RWPE1 (cell line): ENCODE measurements at regions of chr1 and their contacts with region 1.

Region 1: GRCh38 chr1:84772428-84772943 is 82.2 kb upstream of the SSX2IP start:
- DNase-seq: peak; percentile 80
- H3K27ac ChIP-seq: no peak overlapping the region
- CTCF ChIP-seq: peak; percentile 89

Region 2: GRCh38 chr1:84668185-84668584 is 104.3 kb before region 1 on chr1:
- CTCF ChIA-PET with region 1: no interaction called
- POLR2A ChIA-PET with region 1: no interaction called
- DNase-seq: no peak
- H3K27ac ChIP-seq: no peak overlapping the region
- CTCF ChIP-seq: no peak

Region 3: DNA sequence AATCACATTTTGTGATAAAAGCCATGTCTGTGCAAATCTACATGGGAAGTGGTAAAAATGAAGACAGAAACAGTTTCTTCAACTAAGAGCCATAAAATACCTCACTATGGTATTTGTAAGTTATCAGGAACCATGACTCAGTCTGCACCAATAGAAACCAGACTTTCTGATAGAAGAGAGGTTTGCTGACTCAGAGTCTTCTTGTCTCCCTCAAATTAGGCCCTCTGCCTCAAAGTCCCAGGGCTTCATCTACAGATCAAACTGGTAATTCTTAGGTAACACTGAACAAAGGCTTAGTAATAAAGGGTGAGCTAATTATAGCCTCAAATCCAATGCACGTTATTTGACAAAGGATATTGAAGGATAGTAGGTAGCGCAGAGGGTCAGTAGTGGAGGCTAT is 51.3 kb before region 1 on chr1:
- CTCF ChIA-PET with region 1: no interaction called
- POLR2A ChIA-PET with region 1: no interaction called
- DNase-seq: peak; percentile 50
- H3K27ac ChIP-seq: no peak overlapping the region
- CTCF ChIP-seq: no peak

Region 4: GRCh38 chr1:84936116-84936810 is 163.8 kb after region 1 on chr1:
- CTCF ChIA-PET with region 1: interaction called, 23 read pairs
- POLR2A ChIA-PET with region 1: no interaction called
- DNase-seq: peak; percentile 64
- H3K27ac ChIP-seq: no peak overlapping the region
- CTCF ChIP-seq: peak; percentile 94